WTC11 (cell line): ENCODE measurements at regions of chr4 and their contacts with region 1.

Region 1: GRCh38 chr4:113248320-113248719 is 198.9 kb downstream of the ANK2 start:
- DNase-seq: peak; percentile 78
- ATAC-seq: peak; percentile 100
- H3K4me3 Mint-ChIP-seq: no peak overlapping the region
- H3K27ac Mint-ChIP-seq: no peak overlapping the region
- H3K4me1 Mint-ChIP-seq: 0 out of 2 replicates have a peak, but pooled peaks cover 3% of the 10 kb centered on the region
- H3K27me3 Mint-ChIP-seq: no peaks in the 10 kb centered on the region
- CTCF ChIP-seq: peak; percentile 49; the same call in 1 of the 2 replicates

Region 2: DNA sequence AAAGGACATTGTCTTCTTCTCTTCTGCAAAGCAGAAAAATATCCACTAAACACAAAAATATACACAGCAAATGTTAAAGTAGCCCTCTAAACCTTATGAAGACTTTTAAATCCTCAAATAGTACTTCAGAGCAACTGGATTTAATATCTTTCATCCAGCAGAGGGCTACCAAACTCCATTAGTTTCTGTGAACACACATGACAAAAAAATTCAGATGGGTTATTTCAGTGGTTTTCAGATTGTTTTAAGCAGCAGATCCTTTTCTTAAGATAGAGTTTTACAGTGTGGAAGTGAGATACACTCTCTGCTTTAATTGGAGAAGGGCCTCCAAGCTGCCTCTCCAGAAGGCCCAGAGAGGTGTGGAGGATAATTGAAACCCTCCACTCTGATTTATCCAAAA is 142.2 kb before region 1 on chr4:
- CTCF ChIA-PET with region 1: interaction called, 10 read pairs
- POLR2A ChIA-PET with region 1: no interaction called
- DNase-seq: no peak
- ATAC-seq: no peak
- H3K4me3 Mint-ChIP-seq: no peak overlapping the region
- H3K27ac Mint-ChIP-seq: no peak overlapping the region
- H3K4me1 Mint-ChIP-seq: peaks cover 22% of the 10 kb centered on the region
- H3K27me3 Mint-ChIP-seq: no peaks in the 10 kb centered on the region
- CTCF ChIP-seq: no peak

Region 3: GRCh38 chr4:113122066-113122465 is 126.3 kb before region 1 on chr4:
- CTCF ChIA-PET with region 1: no interaction called
- POLR2A ChIA-PET with region 1: no interaction called
- DNase-seq: no peak
- ATAC-seq: no peak
- H3K4me3 Mint-ChIP-seq: no peak overlapping the region
- H3K27ac Mint-ChIP-seq: no peak overlapping the region
- H3K4me1 Mint-ChIP-seq: peaks cover 4% of the 10 kb centered on the region
- H3K27me3 Mint-ChIP-seq: no peaks in the 10 kb centered on the region
- CTCF ChIP-seq: no peak